ENCODE measurements at regions of chr6 and their contacts with region 1.

Region 1: DNA sequence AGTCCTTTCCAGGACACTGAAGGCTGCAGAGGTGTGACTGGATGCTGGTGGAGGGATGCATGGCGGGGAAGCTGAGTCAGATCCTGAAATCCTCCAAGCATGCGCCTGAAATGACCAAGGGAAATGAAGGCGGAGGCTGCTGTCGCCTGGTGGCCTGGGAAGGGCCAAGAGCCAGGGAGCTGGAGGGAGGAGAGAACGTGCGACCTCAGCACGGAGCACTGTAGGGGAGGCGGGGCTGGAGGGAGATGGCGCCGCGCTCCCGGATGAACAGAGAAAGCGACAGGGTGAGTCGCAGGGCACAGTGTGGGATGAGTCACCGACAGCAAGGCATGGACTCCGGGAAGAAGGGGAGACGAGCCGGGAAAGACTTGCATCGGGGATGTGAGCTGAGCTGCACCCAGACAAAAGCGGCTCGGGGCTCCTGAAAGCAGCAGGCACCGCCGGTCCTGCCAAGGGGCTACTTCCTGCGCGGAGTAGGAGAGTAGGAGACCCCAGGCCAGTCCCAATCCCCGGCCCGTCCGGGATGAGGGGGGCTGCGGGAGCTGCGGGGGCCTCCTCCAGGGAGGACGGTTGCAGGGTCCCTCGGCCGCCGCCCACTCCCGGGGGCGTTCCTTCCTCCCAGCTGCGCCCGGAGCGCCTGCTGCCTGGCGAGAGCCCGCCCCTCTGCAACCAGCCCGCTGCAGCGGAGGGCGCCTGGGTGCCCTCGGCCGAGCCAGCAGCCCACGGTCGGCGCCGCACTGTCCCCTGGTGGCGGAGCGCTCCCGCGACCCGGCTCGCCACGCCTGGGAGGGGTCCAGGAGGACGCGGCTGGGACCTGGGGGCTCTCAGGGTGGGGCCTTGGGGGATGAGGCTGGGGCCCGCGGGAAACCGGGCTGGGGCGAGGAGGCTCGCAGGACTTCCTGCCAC is 11.0 kb upstream of the NQO2 start:
- DNase-seq: peak; percentile 74
- H3K4me3 Mint-ChIP-seq: peak overlapping the region; percentile 92
- H3K27ac Mint-ChIP-seq: peak overlapping the region; percentile 97
- H3K4me1 Mint-ChIP-seq: peaks cover 32% of the 10 kb centered on the region
- H3K27me3 Mint-ChIP-seq: peaks cover 4% of the 10 kb centered on the region

Region 2: DNA sequence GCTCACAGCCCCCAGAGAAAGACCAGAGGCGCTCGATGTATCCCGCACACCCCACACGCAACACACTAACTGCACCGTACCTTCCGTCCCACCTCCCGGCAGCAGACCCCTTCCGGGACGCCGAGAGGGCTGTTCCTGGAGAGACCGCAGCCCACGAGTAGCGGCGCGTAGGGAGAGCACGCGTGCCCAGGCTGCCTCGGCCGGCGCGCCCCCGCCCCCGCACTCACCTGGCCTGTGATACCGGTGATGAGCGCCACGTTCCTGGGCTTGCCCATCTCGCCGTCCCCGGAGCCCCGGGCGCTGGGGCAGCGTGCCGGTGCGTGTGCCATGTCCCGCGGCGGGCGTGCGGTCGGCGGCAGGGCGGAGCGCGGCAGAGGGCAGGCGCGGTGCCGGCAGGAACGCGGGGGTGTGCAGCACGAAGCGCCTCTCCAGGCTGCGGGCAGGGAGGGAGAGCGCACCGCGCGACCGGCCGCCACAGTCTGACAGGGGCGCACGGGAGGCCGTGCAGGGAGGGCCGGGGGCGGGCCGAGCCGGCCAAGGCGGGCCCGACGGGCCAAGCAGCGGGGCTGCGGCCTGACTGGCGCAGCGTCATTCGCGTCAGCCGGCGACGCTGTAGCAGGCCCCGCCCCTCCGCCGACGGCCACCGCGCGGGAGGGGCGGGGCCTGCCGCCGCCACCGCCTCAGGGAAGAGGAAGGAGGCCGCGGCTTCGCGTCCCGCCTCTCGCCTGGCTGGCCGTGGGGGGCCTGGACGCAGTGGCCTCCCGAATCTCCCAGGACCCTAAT is 743.4 kb before region 1 on chr6 and contains the start of gene GMDS:
- intact Hi-C with region 1: loop called (anchors 10 kb)
- DNase-seq: peak; percentile 82
- H3K4me3 Mint-ChIP-seq: peak within 1 kb of the TSS; percentile 92
- H3K27ac Mint-ChIP-seq: peak within 1 kb of the TSS; percentile 89
- H3K4me1 Mint-ChIP-seq: peaks cover 76% of the 10 kb centered on the region
- H3K27me3 Mint-ChIP-seq: no peaks in the 10 kb centered on the region
- total RNA-seq, gene GMDS: 44.5 and 53.4 TPM in 2 replicates

Region 3: GRCh38 chr6:2841264-2842138 is 147.2 kb before region 1 on chr6 and contains the start of gene SERPINB1:
- intact Hi-C with region 1: loop called (anchors 1 kb)
- DNase-seq: peak; percentile 80
- H3K4me3 Mint-ChIP-seq: peak within 1 kb of the TSS; percentile 96
- H3K27ac Mint-ChIP-seq: peak within 1 kb of the TSS; percentile 93
- H3K4me1 Mint-ChIP-seq: peaks cover 62% of the 10 kb centered on the region
- H3K27me3 Mint-ChIP-seq: no peaks in the 10 kb centered on the region
- total RNA-seq, gene SERPINB1: 79.5 and 80.1 TPM in 2 replicates

Region 4: GRCh38 chr6:2900821-2901644 is 87.6 kb before region 1 on chr6:
- intact Hi-C with region 1: loop called (anchors 1 kb)
- DNase-seq: no peak
- H3K4me3 Mint-ChIP-seq: peak overlapping the region; percentile 94
- H3K27ac Mint-ChIP-seq: peak overlapping the region; percentile 93
- H3K4me1 Mint-ChIP-seq: peaks cover 60% of the 10 kb centered on the region
- H3K27me3 Mint-ChIP-seq: peaks cover 2% of the 10 kb centered on the region

Region 5: GRCh38 chr6:2952557-2953095 is 36.1 kb before region 1 on chr6:
- intact Hi-C with region 1: loop called (anchors 1 kb)
- DNase-seq: peak; percentile 36
- H3K4me3 Mint-ChIP-seq: peak overlapping the region; percentile 4
- H3K27ac Mint-ChIP-seq: no peak overlapping the region
- H3K4me1 Mint-ChIP-seq: peaks cover 14% of the 10 kb centered on the region
- H3K27me3 Mint-ChIP-seq: peaks cover 13% of the 10 kb centered on the region

Region 6: GRCh38 chr6:3031857-3032640 is 43.4 kb after region 1 on chr6:
- intact Hi-C with region 1: no loop called
- DNase-seq: no peak
- H3K4me3 Mint-ChIP-seq: no peak overlapping the region
- H3K27ac Mint-ChIP-seq: no peak overlapping the region
- H3K4me1 Mint-ChIP-seq: peaks cover 13% of the 10 kb centered on the region
- H3K27me3 Mint-ChIP-seq: peaks cover 27% of the 10 kb centered on the region

Region 7: DNA sequence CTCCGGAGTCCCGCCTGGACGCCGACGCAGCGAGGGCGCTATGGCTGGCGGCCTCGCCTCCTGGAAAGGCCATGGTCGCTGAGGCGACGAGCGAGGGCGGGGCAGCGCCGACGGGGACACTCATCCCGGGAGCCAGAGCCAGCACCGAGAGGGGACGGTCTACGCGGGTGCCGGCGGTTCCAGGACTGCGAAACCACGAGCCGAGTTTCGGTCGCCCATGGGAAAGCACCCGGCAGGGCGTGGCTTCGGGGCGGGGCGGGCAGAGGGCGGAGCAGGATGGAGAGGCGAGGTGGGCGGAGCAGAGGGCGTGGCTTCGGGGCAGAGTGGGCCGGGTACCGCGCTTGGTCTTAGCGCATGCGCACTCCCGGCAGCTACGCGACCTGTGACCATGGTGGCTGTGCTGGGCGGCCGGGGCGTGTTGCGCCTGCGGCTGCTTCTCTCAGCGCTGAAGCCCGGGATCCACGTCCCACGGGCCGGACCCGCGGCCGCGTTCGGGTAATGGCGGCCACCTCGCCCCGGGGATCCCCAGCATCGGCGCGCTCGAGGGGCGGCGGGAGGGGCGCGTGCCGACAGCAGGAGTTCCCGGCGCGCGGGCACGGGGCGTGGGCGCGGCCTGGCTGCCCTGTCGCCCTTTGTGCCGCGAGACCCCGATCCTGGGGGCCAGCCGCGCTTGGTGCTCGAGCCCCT is 129.8 kb after region 1 on chr6 and contains the start of gene BPHL:
- intact Hi-C with region 1: loop called (anchors 2 kb)
- DNase-seq: peak; percentile 99
- H3K4me3 Mint-ChIP-seq: peak within 1 kb of the TSS; percentile 82
- H3K27ac Mint-ChIP-seq: peak within 1 kb of the TSS; percentile 78
- H3K4me1 Mint-ChIP-seq: peaks cover 23% of the 10 kb centered on the region
- H3K27me3 Mint-ChIP-seq: no peaks in the 10 kb centered on the region
- total RNA-seq, gene BPHL: 6.6 and 7.9 TPM in 2 replicates

Region 8: GRCh38 chr6:4135665-4136353 is 1147.1 kb after region 1 on chr6:
- intact Hi-C with region 1: loop called (anchors 10 kb)
- DNase-seq: peak; percentile 88
- H3K4me3 Mint-ChIP-seq: peak overlapping the region; percentile 83
- H3K27ac Mint-ChIP-seq: peak overlapping the region; percentile 80
- H3K4me1 Mint-ChIP-seq: peaks cover 27% of the 10 kb centered on the region
- H3K27me3 Mint-ChIP-seq: peaks cover 4% of the 10 kb centered on the region